ENCODE measurements at regions of chr6 and their contacts with region 1.

Region 1: DNA sequence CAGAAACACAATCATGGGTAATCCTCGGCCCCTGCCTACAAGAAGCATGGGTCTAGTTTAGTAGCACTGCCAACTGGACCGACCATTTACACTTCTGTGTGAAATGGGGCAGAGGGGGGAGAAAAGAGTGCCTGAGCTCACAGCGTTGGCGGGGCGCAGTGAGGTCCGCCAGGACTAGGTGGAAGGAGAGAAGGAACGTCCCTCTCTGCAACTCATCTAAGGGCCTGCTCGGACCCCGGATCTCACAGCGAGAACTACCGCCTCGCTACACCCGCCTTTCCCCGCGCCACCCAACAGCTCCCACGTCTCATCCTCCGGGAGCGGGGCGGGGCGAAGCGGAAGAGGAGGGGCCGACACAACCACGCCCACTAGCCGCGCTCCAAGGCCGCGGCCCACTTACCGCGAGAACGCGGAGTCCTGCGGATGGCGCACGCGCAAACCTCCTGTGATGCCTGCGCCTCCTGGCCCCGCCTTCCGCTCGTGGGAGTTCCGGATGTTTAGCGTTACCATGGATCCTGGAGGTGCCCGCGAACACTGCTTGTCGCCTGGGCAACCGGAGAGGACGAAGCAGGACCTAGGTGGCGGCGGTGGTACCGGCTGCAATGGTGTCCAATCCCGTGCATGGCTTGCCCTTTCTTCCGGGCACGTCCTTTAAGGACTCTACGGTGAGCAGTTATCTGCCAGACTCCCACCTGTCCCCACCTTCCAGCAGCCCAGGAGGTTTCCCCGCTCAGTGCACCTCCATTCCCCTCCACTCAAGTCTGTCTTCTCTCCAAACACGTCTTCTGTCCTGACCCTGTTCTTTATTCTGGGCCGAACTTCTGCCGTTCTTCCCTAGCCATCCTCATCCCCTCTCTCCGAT is at the start of gene EFHC1:
- DNase-seq: peak; percentile 98
- total RNA-seq, gene EFHC1: 20.7 and 29.2 TPM in 2 replicates

Region 2: DNA sequence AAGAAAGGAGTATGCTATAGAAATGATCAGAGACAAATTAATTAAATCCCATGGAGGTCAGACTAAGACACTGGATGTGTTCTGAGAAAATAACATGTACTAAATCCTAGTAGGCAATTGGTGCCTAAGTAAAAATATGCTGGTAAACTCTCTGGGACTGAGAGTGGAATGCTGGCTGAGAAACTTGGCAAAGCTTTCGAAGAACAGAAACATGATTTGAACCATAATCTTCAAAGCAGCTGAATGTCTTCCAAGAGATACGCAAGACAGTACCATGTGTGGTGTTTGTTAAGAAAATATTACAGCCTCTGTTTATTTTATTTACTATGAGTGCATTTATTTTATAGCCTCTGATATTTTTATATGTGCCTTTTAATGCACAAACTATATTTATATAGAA is 55.3 kb after region 1 on chr6:
- in situ Hi-C with region 1: no loop called
- DNase-seq: no peak

Region 3: DNA sequence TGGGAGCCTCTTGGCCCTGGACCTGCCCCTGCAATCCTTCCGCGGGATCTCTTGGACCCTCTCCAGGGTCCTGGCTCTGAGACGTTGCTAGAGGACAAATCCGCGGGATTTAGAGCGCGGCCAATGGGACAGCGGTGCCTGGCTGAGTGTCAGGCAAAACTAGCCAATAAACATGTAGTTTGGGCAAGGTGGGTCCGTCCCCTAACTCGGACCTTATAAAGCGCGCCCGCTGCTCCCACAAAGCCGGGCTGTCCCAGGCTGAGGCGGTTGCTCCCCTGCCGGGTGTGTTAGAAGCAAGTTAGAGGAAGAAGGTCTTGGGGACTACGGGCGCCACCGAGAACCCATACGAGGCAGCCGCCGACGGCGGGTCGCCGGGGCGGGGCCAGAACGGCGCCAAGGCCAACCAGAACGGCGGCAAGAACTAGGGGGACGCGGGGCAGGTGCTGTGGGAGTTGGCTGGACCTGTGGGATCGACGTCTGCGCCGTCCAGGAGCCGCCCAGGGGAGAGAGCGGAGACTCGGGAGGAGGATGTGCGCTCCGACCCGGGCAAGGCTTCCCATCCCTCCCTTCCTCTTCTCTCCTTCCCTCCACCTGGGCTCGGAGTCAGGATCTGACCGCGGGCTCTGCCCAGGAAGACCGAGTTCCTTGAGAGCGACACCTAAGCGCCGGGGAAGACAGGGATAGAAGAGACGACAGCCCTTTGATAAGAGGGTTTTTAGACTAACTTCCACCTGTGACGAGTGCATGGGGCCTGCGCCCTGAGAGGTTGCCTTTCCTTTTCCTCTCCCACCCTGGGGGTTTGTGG is 244.3 kb after region 1 on chr6:
- in situ Hi-C with region 1: loop called (anchors 25 kb)
- DNase-seq: peak; percentile 96

Measured in G401 (cell line).